Activated T-helper 2 cell treated with anti-CD3 and anti-CD28 coated beads, Interferon-gamma antibody, Interleukin-2, Interleukin-4, amounts not matched to agents 10 μg/mL and 5 μg/mL and 100 μg/mL, durations not matched to agents 14 hours and 24 hours and 36 hours (primary cell): ENCODE measurements at regions of chr3 and their contacts with region 1.

Region 1: DNA sequence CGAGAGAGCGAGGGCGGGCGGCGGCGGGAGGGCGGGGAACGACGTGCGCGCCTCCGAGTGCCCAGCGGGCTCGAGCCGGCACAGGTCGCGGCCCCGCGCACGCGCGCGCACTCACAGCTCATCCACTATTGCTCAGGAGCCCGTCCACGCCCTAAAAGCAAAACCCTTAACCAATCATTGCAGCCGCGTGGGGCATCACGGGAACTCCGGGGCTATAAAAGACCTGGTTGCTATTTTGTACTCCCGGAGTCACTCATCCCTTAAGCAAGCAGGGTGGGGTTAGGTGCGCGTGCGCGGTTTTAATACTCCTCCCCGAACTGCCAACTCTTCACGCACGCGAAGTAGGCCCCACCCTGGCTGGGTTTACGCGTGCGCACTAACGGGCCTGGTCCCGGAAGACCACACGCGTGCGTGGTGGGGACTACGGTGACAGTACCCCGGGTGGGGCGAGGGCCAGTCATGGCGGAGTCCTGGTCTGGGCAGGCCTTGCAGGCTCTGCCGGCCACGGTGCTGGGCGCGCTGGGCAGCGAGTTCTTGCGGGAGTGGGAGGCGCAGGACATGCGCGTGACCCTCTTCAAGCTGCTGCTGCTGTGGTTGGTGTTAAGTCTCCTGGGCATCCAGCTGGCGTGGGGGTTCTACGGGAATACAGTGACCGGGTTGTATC is at the starts of genes RHOA and TCTA:
- DNase-seq: peak; percentile 99
- H3K4me3 Mint-ChIP-seq: peak within 1 kb of the TSS; percentile 93
- H3K27ac Mint-ChIP-seq: peak within 1 kb of the TSS; percentile 90
- H3K4me1 Mint-ChIP-seq: peaks cover 54% of the 10 kb centered on the region
- H3K27me3 Mint-ChIP-seq: no peaks in the 10 kb centered on the region
- total RNA-seq, gene RHOA: 425 and 428 TPM in 2 replicates
- total RNA-seq, gene TCTA: 18.9 and 19.4 TPM in 2 replicates

Region 2: DNA sequence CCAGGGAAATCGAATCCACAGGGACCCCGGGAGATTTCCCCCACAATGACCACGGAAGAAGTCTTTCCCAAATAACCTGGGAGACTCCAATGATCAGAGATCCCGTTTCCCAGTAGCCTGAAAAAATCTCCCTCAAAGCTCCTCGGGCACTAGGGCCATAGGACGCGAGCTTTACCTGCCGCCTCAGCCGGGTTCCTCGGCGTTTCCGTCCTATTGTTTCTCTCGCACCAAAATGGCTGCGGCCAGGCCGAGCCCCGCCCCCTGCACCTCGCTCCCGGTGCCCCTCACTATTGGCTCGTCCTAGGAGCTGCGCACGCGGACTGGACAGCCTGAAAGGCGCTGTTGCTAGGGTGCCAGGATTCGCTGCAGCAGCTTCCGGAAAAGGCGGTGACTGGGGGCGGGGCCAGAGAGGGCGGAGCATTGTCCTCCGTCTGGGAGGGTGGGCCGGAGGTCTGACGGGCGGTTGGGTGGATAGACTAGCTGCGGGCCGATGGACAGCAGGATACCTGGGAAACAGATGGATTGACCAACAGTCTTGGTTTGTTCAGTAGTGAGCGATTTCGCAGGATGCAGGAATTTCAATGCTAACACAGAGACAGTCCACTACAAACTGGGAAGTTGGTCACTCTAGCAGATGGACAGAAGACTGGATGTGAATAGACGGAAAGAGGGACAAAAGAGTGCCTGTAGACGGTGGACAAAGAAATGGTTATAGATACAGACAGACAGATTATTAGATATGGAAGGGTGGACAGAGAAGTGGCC is 694.9 kb before region 1 on chr3 and contains the start of gene IP6K2:
- intact Hi-C with region 1: no loop called
- DNase-seq: peak; percentile 98
- H3K4me3 Mint-ChIP-seq: peak within 1 kb of the TSS; percentile 98
- H3K27ac Mint-ChIP-seq: peak within 1 kb of the TSS; percentile 97
- H3K4me1 Mint-ChIP-seq: peaks cover 28% of the 10 kb centered on the region
- H3K27me3 Mint-ChIP-seq: peaks cover 13% of the 10 kb centered on the region
- total RNA-seq, gene IP6K2: 65.4 and 68.2 TPM in 2 replicates

Region 3: GRCh38 chr3:49339945-49340800 is 71.9 kb before region 1 on chr3 and contains the start of gene USP4:
- intact Hi-C with region 1: loop called (anchors 1 kb)
- DNase-seq: peak; percentile 91
- H3K4me3 Mint-ChIP-seq: peak within 1 kb of the TSS; percentile 95
- H3K27ac Mint-ChIP-seq: peak within 1 kb of the TSS; percentile 96
- H3K4me1 Mint-ChIP-seq: peaks cover 36% of the 10 kb centered on the region
- H3K27me3 Mint-ChIP-seq: no peaks in the 10 kb centered on the region
- total RNA-seq, gene USP4: 78.6 and 82.7 TPM in 2 replicates

Region 4: DNA sequence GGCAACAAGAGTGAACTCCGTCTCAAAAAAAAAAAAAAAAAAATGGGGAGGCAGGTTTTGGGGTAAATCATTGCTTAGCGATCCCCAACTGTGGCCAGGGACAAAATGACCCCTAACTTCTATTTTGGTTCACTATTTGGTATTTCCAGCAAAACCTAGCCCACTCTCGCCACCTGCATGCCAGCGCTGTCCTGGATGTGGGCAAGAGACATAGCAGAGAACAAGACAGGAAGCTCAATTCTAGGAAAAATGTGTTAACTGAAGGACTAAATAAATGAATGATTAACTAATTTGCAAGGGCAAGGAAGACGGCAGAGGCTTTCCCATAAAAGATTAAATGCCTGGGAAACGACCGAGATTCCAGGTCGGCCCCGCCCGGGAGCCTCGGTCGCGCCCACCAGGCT is 16.6 kb after region 1 on chr3:
- intact Hi-C with region 1: loop called (anchors 1 kb)
- DNase-seq: no peak
- H3K4me3 Mint-ChIP-seq: peak overlapping the region; percentile 94
- H3K27ac Mint-ChIP-seq: peak overlapping the region; percentile 93
- H3K4me1 Mint-ChIP-seq: peaks cover 14% of the 10 kb centered on the region
- H3K27me3 Mint-ChIP-seq: no peaks in the 10 kb centered on the region

Region 5: DNA sequence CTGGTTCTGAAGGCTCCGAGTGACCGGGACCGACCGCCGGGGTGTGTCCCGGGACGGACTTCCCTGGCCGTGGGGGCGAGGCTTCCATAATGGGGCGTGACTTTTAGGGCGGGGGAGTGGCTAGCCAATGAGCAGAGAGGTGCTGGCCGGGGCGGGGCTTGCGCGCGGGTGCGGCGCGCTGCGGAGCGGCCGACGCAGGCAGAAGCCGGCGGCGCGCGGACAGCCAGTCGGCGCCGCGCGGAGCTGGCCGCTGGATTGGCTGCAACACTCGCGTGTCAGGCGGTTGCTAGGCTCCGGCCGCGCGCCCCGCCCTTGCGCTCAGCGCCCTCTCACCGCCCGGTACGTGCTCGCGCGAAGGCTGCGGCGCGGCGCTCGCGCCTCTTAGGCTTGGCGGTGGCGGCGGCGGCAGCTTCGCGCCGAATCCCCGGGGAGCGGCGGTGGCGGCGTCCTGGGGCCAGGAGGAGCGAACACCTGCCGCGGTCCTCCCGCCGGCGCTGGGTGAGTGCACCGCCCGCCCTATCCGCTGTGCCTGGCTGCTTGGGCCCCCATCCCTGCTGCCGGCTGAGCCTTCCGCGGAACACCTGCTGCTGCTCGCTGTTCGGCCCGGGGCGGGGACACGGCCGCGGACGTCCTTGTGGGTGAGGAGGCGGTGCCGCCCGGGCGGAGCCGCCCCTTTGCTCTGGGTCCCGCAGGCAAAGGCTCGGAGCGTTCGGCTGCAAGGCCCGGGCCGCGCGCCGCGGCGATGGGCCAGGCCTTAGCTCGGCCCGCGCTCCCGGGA is 58.0 kb after region 1 on chr3 and contains the start of gene DAG1:
- intact Hi-C with region 1: loop called (anchors 1 kb)
- DNase-seq: peak; percentile 94
- H3K4me3 Mint-ChIP-seq: peak within 1 kb of the TSS; percentile 87
- H3K27ac Mint-ChIP-seq: peak within 1 kb of the TSS; percentile 84
- H3K4me1 Mint-ChIP-seq: peaks cover 18% of the 10 kb centered on the region
- H3K27me3 Mint-ChIP-seq: no peaks in the 10 kb centered on the region
- total RNA-seq, gene DAG1: 17.0 and 25.9 TPM in 2 replicates

Region 6: GRCh38 chr3:49616491-49616941 is 204.4 kb after region 1 on chr3:
- intact Hi-C with region 1: no loop called
- DNase-seq: no peak
- H3K4me3 Mint-ChIP-seq: no peak overlapping the region
- H3K27ac Mint-ChIP-seq: no peak overlapping the region
- H3K4me1 Mint-ChIP-seq: no peaks in the 10 kb centered on the region
- H3K27me3 Mint-ChIP-seq: peaks cover 15% of the 10 kb centered on the region